ENCODE measurements at regions of chr16 and their contacts with region 1.

Region 1: GRCh38 chr16:48609652-48610029 is 339 bp downstream of the N4BP1 start:
- DNase-seq: peak; percentile 87
- ATAC-seq: peak; percentile 71

Region 2: GRCh38 chr16:48164907-48165726 is 444.5 kb before region 1 on chr16:
- intact Hi-C with region 1: no loop called
- DNase-seq: peak; percentile 84
- ATAC-seq: peak; percentile 97

Region 3: GRCh38 chr16:48365581-48366164 is 244.0 kb before region 1 on chr16:
- intact Hi-C with region 1: loop called (anchors 5 kb)
- DNase-seq: peak; percentile 95
- ATAC-seq: peak; percentile 99

Measured in Right ventricle myocardium superior (tissue), 1 donor.